K562 (cell line): ENCODE measurements at regions of chr11 and their contacts with region 1.

Region 1: GRCh38 chr11:95150946-95151684 is 61.5 kb downstream of the ENDOD1 start:
- DNase-seq: peak; percentile 81 to 87 (median 82)
- ATAC-seq: peak; percentile 77
- H3K4me3 ChIP-seq: no peak overlapping the region
- H3K27ac ChIP-seq: no peak overlapping the region
- H3K4me1 ChIP-seq: peaks cover 45 to 48% of the 10 kb centered on the region in 2 experiments
- H3K27me3 ChIP-seq: no peaks in the 10 kb centered on the region
- CTCF ChIP-seq: peak; percentile 80 to 93 (median 85); a peak in 5 of 6 replicates
- EP300 ChIP-seq: no peak
- POLR2A ChIP-seq: no peak
- RAD21 ChIP-seq: no peak; a peak in 1 of 4 replicates

Region 2: GRCh38 chr11:94973099-94973968 is 177.8 kb before region 1 on chr11 and contains the starts of genes CWC15 and KDM4D:
- CTCF ChIA-PET with region 1: no interaction called
- POLR2A ChIA-PET with region 1: interaction called, 4 read pairs
- in situ Hi-C with region 1: no loop called
- intact Hi-C with region 1: loop called (anchors 5 kb)
- DNase-seq: peak; percentile 94 to 97 (median 95)
- ATAC-seq: peak; percentile 100
- H3K4me3 ChIP-seq: peak within 1 kb of the TSS; percentile 86
- H3K27ac ChIP-seq: peak within 1 kb of the TSS; percentile 83
- H3K4me1 ChIP-seq: peaks cover 0 to 8% of the 10 kb centered on the region in 2 experiments; a peak in 2 of 5 replicates
- H3K27me3 ChIP-seq: no peaks in the 10 kb centered on the region
- CTCF ChIP-seq: no peak
- EP300 ChIP-seq: peak; percentile 27; the same call in 1 of the 2 replicates
- POLR2A ChIP-seq: peak; percentile 95
- RAD21 ChIP-seq: no peak
- polyA plus RNA-seq, gene CWC15: 128 to 168 TPM
- polyA plus RNA-seq, gene KDM4D: 0.34 to 0.39 TPM

Region 3: DNA sequence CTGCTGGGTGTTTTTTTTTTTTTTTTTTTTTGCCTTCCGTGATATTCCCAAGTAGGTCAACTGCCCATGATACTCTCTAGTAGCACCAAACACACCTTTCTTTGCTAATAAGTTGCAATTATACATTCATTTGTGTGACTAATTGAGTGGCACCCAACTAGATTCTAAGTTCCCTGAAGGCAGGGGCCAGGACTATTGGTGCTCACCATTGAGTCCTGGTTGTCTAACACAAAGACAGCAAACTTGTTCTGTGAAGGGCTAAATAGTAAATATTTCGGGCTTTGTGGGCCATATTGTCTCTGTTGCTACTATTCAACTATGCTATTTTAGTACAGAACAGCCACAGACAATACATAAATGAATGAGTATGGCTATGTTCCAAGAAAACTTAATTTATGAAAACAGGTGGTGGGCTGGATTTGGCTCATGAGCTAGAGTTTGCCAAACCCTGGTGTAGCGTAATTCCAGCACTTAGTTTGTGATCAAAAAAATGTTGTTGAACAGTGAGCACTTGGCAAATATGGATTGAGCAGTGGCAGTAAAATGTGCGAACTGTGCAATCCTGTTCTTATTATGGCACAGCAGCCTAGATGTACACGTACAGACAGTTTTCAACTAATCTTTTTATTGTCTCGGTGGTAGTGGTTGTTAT is 50.1 kb before region 1 on chr11:
- CTCF ChIA-PET with region 1: no interaction called
- POLR2A ChIA-PET with region 1: interaction called, 4 read pairs
- in situ Hi-C with region 1: no loop called
- intact Hi-C with region 1: loop called (anchors 5 kb)
- DNase-seq: no peak
- ATAC-seq: no peak
- H3K4me3 ChIP-seq: no peak overlapping the region
- H3K27ac ChIP-seq: no peak overlapping the region
- H3K4me1 ChIP-seq: peaks cover 6 to 43% of the 10 kb centered on the region in 2 experiments; a peak in 4 of 5 replicates
- H3K27me3 ChIP-seq: no peaks in the 10 kb centered on the region
- CTCF ChIP-seq: no peak
- EP300 ChIP-seq: no peak
- POLR2A ChIP-seq: no peak
- RAD21 ChIP-seq: no peak

Region 4: GRCh38 chr11:95301474-95301873 is 150.4 kb after region 1 on chr11:
- CTCF ChIA-PET with region 1: no interaction called
- POLR2A ChIA-PET with region 1: interaction called, 3 read pairs
- in situ Hi-C with region 1: loop called (anchors 10 kb)
- intact Hi-C with region 1: loop called (anchors 5 kb)
- DNase-seq: no peak
- ATAC-seq: no peak
- H3K4me3 ChIP-seq: no peak overlapping the region
- H3K27ac ChIP-seq: no peak overlapping the region
- H3K4me1 ChIP-seq: peaks cover 0 to 9% of the 10 kb centered on the region in 2 experiments; a peak in 1 of 5 replicates
- H3K27me3 ChIP-seq: peaks cover 6 to 20% of the 10 kb centered on the region in 2 experiments; a peak in 3 of 5 replicates
- CTCF ChIP-seq: no peak
- EP300 ChIP-seq: no peak
- POLR2A ChIP-seq: no peak
- RAD21 ChIP-seq: no peak

Region 5: GRCh38 chr11:95705485-95706124 is 554.5 kb after region 1 on chr11:
- CTCF ChIA-PET with region 1: interaction called, 8 read pairs
- POLR2A ChIA-PET with region 1: interaction called, 4 read pairs
- in situ Hi-C with region 1: no loop called
- intact Hi-C with region 1: loop called (anchors 1 kb)
- DNase-seq: peak; percentile 69 to 90 (median 74)
- ATAC-seq: peak; percentile 90
- H3K4me3 ChIP-seq: no peak overlapping the region
- H3K27ac ChIP-seq: no peak overlapping the region
- H3K4me1 ChIP-seq: peaks cover 4 to 40% of the 10 kb centered on the region in 2 experiments; a peak in 2 of 5 replicates
- H3K27me3 ChIP-seq: no peaks in the 10 kb centered on the region
- CTCF ChIP-seq: peak; percentile 87 to 92 (median 92)
- EP300 ChIP-seq: no peak
- POLR2A ChIP-seq: no peak
- RAD21 ChIP-seq: peak; percentile 97 to 98

Region 6: DNA sequence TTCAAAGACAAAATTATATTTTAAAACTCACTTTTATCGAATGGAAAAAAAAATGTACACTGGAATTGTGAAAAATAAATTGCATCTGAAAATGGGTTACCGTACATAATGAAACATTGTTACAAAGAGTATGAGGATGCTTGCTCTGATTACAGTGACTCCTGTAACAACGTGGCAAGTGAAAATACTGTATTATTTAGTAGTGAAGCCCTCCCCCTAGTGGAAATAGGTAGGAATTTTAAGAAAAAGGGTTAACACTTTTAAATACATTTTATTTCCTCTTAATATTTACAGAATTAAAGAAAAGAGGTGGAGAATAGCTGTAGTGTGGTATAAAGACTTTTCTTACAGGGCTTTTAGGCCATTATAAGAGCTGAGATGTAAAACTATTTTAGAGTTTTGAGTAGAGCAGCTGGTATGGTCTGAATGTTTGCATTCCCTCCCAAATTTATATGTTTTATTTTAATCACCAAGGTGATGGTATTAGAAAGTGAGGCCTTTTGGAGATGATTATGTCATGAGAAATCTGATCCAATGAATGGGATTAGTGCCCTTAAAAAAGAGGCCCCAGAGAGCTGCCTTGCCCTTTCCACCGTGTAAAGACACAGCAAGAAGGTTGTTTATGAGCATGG is 613.3 kb after region 1 on chr11:
- CTCF ChIA-PET with region 1: interaction called, 21 read pairs
- POLR2A ChIA-PET with region 1: interaction called, 4 read pairs
- in situ Hi-C with region 1: no loop called
- intact Hi-C with region 1: loop called (anchors 1 kb)
- DNase-seq: peak; percentile 54 to 65 (median 60)
- ATAC-seq: peak; percentile 81
- H3K4me3 ChIP-seq: no peak overlapping the region
- H3K27ac ChIP-seq: no peak overlapping the region
- H3K4me1 ChIP-seq: no peaks in the 10 kb centered on the region
- H3K27me3 ChIP-seq: no peaks in the 10 kb centered on the region
- CTCF ChIP-seq: peak; percentile 38 to 78 (median 54); a peak in 4 of 6 replicates
- EP300 ChIP-seq: no peak
- POLR2A ChIP-seq: no peak
- RAD21 ChIP-seq: peak; percentile 93 to 96

Region 7: DNA sequence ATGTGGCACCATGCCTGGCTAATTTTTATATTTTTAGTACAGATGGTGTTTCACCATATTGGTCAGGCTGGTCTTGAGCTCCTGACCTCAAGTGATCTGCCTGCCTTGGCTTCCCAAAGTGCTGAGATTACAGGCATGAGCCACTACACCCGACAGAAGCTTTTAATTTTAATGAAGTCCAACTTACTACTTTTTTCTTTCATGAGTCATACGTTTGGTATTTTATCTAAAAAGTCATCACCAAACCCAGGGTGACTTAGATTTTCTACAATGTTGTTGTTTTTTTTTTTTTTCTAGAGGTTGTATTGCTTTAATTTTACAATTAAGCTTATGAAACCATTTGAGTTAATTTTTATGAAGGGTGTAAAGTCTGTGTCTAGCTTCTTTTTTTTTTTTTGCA is 1273.6 kb after region 1 on chr11:
- CTCF ChIA-PET with region 1: interaction called, 3 read pairs
- POLR2A ChIA-PET with region 1: no interaction called
- in situ Hi-C with region 1: no loop called
- intact Hi-C with region 1: loop called (anchors 5 kb)
- DNase-seq: no peak
- ATAC-seq: no peak
- H3K4me3 ChIP-seq: no peak overlapping the region
- H3K27ac ChIP-seq: no peak overlapping the region
- H3K4me1 ChIP-seq: no peaks in the 10 kb centered on the region
- H3K27me3 ChIP-seq: no peaks in the 10 kb centered on the region
- CTCF ChIP-seq: no peak
- EP300 ChIP-seq: no peak
- POLR2A ChIP-seq: no peak
- RAD21 ChIP-seq: no peak